Dorsolateral prefrontal cortex (tissue), 120 donors: ENCODE measurements at regions of chr1 and their contacts with region 1.

Region 1: GRCh38 chr1:9809100-9809510 is 14.7 kb downstream of the CLSTN1 start:
- DNase-seq: no peak
- H3K4me3 ChIP-seq: peak overlapping the region in 5 of 59 donors; percentile 3 to 22 (median 11)
- H3K27ac ChIP-seq: peak overlapping the region in 2 of 59 donors; percentile 5 to 33
- H3K27me3 ChIP-seq: no peaks in the 10 kb centered on the region
- CTCF ChIP-seq: no peak

Region 2: DNA sequence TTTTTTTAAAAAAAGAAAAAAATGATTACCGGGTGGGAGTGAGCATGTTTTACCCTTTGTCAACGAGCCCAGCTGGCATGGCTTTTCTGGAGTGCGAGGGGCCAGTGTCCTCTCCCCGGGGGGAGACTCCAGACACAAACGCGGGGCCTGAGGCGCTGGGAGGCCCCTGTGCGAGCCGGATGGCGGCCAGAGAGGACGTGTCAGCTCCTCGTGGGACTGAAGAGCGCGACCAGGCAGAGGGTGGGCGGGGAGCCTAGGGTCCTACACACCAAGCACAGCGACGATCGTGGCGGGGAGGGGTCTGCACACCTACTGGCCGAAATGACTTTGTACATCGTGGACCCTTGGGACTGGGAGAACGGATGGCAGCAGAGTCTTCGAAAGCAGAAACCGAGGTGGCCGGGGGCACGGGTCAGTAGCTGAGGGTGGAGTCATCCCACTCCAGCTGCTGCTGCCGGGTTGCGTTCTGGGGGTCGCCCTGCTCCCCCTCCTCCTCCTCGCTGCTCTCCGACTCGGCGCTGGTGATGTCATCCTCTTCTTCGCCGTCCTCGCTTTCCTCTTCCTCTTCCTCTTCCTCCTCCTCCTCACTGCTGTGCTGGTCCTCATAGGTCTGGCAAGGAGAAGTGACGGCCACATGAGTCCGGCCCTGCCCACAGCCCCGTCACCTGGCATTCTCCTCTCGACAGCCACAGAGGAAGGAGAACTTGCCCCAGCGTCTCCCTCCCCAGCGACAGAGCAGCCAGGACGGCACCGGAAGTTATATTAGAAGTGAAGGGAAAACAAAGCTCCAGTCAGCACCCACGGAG is 78.8 kb before region 1 on chr1:
- intact Hi-C with region 1: loop called in 1 of 2 experiments (anchors 10 kb)
- DNase-seq: peak in 3 of 10 donors; percentile 39 to 66 (median 45)
- H3K4me3 ChIP-seq: no peak overlapping the region
- H3K27ac ChIP-seq: peak overlapping the region in 54 of 59 donors; percentile 22 to 86 (median 66)
- H3K27me3 ChIP-seq: no peaks in the 10 kb centered on the region
- CTCF ChIP-seq: no peak

Region 3: DNA sequence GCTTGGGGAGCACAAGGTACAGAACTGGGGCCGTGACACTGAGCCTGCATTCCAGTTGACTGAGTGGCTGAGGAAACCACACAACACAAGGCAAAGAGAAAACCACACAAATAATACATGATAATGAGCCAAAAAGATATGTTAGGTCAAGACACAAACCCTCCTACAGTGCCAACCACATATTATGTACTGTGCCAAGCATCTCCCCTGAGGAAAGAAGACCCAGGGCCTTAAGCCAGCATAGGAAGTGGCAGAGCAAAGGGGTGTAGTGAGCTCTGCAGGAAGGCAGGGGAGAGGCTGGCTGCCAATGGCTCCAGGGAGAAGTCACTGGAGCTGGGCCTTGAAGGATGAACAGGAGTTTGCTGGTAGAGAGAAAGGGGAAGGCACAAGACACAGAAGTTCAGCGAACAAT is 72.7 kb after region 1 on chr1:
- intact Hi-C with region 1: no loop called
- DNase-seq: no peak
- H3K4me3 ChIP-seq: no peak overlapping the region
- H3K27ac ChIP-seq: no peak overlapping the region
- H3K27me3 ChIP-seq: no peaks in the 10 kb centered on the region
- CTCF ChIP-seq: no peak